Left ventricle myocardium superior (tissue), 1 donor: ENCODE measurements at regions of chr3 and their contacts with region 1.

Region 1: DNA sequence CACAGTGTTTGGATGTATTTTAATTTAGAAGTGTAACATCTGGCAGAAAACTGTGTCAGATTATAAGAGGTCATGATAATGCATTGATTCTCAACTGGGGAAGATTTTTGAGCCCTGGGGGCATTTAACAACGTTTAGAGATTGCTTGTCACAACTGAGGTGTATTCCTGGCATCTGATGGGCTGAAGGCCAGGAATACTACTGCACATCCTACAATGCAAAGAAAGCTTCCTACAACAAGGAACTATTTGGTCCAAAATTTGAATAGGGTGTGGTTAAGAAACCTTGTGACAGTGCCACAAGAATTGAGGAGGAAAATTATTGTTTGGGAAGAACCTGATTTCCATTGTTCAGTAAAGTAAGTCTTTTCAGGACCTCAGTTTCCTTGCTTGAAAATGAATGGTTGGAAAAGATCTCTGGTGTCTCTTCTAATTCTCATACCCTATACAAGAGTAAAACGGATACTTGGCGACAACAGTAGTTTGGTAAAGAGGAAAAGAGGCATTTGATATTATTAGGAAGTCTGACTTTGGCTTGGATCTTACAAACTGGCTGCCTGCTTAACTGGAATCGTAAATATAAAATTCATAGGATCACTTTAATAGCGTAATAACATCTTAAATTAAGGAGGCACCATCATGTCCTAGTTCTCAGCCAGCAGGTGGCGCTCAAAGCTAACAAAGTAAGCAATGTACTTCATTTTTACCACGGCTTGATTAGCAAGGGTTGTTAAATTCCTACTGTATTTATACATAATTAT is 4.3 kb downstream of the DAZL start:
- DNase-seq: peak; percentile 87
- ATAC-seq: peak; percentile 68

Region 2: GRCh38 chr3:17032407-17033034 is 431.6 kb after region 1 on chr3:
- intact Hi-C with region 1: loop called (anchors 10 kb)
- DNase-seq: no peak
- ATAC-seq: peak; percentile 59

Region 3: DNA sequence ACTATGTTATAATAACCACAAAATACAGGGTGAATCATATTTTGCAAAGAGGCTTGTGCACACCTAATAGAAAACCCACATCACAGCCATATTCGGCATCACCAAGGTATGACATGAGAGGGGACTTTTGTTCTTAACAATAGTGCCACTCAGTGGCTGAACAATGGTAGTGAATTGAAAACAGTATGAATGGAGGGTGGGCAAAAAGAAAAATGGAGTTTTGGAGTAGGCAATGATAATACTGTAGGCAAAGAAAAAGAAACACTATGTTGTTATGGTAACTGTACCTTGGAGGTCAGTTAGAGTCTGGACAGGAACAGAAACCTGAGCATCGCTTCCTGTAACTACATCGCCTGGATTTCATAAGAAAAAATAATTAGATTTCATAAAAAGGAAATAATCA is 632.4 kb after region 1 on chr3:
- intact Hi-C with region 1: loop called (anchors 5 kb)
- DNase-seq: no peak
- ATAC-seq: peak; percentile 77